Activated T-helper 1 cell treated with anti-CD3 and anti-CD28 coated beads, Interleukin-12 subunit alpha, Interleukin-12 subunit beta, Interleukin-2, Interleukin-4 antibody, amounts not matched to agents 30 ng/mL and 10 ng/mL and 1 ng/mL, durations not matched to agents 14 hours and 24 hours and 36 hours (primary cell): ENCODE measurements at regions of chr14 and their contacts with region 1.

Region 1: GRCh38 chr14:89954070-89955028 is at the start of gene EFCAB11:
- DNase-seq: peak; percentile 95
- H3K4me3 Mint-ChIP-seq: peak within 1 kb of the TSS; percentile 95
- H3K27ac Mint-ChIP-seq: peak within 1 kb of the TSS; percentile 93
- H3K4me1 Mint-ChIP-seq: peaks cover 58% of the 10 kb centered on the region
- H3K27me3 Mint-ChIP-seq: no peaks in the 10 kb centered on the region
- total RNA-seq, gene EFCAB11: 6.0 and 8.2 TPM in 2 replicates

Region 2: GRCh38 chr14:87992718-87993628 is 1961.4 kb before region 1 on chr14 and contains the start of gene GALC:
- intact Hi-C with region 1: loop called (anchors 2 kb)
- DNase-seq: peak; percentile 93
- H3K4me3 Mint-ChIP-seq: peak within 1 kb of the TSS; percentile 92
- H3K27ac Mint-ChIP-seq: peak within 1 kb of the TSS; percentile 98
- H3K4me1 Mint-ChIP-seq: peaks cover 55% of the 10 kb centered on the region
- H3K27me3 Mint-ChIP-seq: no peaks in the 10 kb centered on the region
- total RNA-seq, gene GALC: 8.6 and 8.7 TPM in 2 replicates

Region 3: GRCh38 chr14:88792572-88793258 is 1161.6 kb before region 1 on chr14 and contains the start of gene EML5:
- intact Hi-C with region 1: loop called (anchors 1 kb)
- DNase-seq: peak; percentile 75
- H3K4me3 Mint-ChIP-seq: peak within 1 kb of the TSS; percentile 82
- H3K27ac Mint-ChIP-seq: peak within 1 kb of the TSS; percentile 71
- H3K4me1 Mint-ChIP-seq: peaks cover 13% of the 10 kb centered on the region
- H3K27me3 Mint-ChIP-seq: peaks cover 31% of the 10 kb centered on the region
- total RNA-seq, gene EML5: 1.5 and 1.7 TPM in 2 replicates

Region 4: GRCh38 chr14:89618811-89619551 is 335.4 kb before region 1 on chr14:
- intact Hi-C with region 1: loop called (anchors 1 kb)
- DNase-seq: peak; percentile 69
- H3K4me3 Mint-ChIP-seq: peak overlapping the region; percentile 95
- H3K27ac Mint-ChIP-seq: peak overlapping the region; percentile 99
- H3K4me1 Mint-ChIP-seq: peaks cover 72% of the 10 kb centered on the region
- H3K27me3 Mint-ChIP-seq: no peaks in the 10 kb centered on the region

Region 5: DNA sequence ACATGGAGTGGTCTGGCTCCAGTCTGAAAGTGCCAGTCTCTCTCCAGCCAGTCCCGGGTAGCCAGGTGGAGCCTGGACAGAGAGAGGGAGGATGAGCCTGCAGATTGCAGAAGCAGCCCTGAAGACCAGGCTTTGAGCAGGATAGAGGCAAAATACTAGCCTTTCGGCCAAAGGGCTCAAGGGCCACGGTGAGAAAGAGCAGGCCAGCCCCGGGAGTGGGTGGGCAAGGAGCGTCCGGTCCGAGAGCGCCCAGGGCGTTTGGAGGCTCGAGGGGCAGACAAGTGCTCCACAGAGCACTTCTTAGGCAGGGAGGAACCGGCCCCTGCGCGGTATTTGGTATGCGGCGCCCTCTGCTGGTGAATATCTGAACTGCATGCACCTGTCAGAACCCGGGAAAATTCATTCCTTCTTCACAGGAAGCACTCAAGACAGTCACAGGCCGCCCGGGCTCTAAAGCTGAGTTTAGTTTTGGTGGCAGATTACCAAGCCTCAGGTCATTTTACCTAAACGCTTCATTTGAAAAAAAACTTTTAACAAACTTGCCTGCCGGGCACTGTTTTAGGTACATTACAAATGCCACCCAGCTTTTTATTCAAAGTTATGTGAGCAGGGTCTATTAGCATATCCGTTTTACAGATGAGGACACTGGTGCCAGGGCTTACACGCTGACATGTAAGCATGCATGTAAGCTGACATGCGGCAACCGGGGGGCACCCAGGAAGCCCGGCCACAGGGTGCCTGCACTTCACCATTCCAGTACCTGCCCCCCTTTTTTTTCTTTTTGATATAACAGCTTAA is 281.0 kb after region 1 on chr14:
- intact Hi-C with region 1: loop called (anchors 5 kb)
- DNase-seq: peak; percentile 59
- H3K4me3 Mint-ChIP-seq: no peak overlapping the region
- H3K27ac Mint-ChIP-seq: no peak overlapping the region
- H3K4me1 Mint-ChIP-seq: no peaks in the 10 kb centered on the region
- H3K27me3 Mint-ChIP-seq: peaks cover 5% of the 10 kb centered on the region

Region 6: DNA sequence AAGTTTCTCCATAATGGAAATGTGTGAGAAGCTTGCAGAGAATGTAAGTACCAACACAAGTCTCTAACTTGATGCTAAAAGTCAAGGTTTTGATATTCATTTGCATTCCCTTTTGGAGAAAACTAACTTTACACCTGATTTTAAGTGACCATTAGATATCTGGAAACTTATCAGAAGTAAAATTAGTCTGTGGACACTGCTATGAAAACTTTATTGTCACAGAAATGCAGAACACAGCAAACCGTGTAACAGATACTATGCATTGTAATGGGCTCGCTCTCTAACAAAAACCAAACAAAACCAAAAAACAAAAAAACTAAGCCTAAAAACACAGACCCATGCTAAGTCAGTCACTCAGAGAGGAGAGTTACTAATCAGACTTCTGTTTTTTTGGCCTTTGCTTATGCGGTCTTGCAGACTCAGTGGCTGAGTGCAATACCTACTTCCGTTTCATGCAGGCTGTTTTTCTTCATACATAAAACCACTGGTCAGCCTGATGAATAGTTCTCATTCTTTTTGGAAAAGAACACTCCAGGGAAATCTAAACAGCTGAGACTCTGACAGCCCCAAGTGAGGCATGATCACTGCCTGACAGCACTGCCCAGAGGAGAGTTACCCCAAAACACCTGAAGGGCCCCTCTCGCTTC is 341.6 kb after region 1 on chr14:
- intact Hi-C with region 1: no loop called
- DNase-seq: no peak
- H3K4me3 Mint-ChIP-seq: no peak overlapping the region
- H3K27ac Mint-ChIP-seq: no peak overlapping the region
- H3K4me1 Mint-ChIP-seq: peaks cover 8% of the 10 kb centered on the region
- H3K27me3 Mint-ChIP-seq: no peaks in the 10 kb centered on the region

Region 7: GRCh38 chr14:90383075-90383730 is 428.9 kb after region 1 on chr14:
- intact Hi-C with region 1: loop called (anchors 1 kb)
- DNase-seq: peak; percentile 98
- H3K4me3 Mint-ChIP-seq: no peak overlapping the region
- H3K27ac Mint-ChIP-seq: no peak overlapping the region
- H3K4me1 Mint-ChIP-seq: peaks cover 6% of the 10 kb centered on the region
- H3K27me3 Mint-ChIP-seq: peaks cover 1% of the 10 kb centered on the region

Region 8: DNA sequence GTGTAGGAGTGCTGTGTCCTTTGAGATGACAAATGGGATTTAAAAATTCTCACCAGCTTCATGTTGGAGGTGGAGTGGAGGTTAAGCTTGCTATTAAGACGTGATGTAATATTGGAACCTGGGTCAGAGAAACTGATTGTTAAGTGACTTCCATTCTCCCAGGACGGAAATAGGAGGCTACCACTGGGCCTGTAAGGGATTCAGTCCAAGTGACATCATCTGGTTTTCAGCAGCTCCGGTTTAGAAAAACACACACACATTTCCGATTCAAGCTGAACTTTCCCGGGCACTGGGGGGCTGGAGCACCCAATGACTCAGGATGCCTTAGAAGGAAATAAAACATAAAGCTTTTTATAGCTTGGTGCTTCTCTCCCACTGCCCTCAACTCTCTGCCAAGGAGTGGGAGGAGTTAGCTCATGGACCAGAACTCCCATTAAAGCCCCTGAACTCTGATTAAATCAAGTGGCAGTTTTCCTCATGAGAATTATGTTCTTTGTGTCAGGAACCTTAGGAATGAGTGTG is 454.9 kb after region 1 on chr14:
- intact Hi-C with region 1: no loop called
- DNase-seq: no peak
- H3K4me3 Mint-ChIP-seq: no peak overlapping the region
- H3K27ac Mint-ChIP-seq: no peak overlapping the region
- H3K4me1 Mint-ChIP-seq: peaks cover 29% of the 10 kb centered on the region
- H3K27me3 Mint-ChIP-seq: peaks cover 3% of the 10 kb centered on the region